HCT116 (cell line): ENCODE measurements at regions of chr2 and their contacts with region 1.

Region 1: GRCh38 chr2:223465793-223466192 is 136.4 kb downstream of the SCG2 start:
- DNase-seq: no peak
- ATAC-seq: no peak
- H3K4me3 ChIP-seq: no peak overlapping the region
- H3K27ac ChIP-seq: no peak overlapping the region
- H3K4me1 ChIP-seq: peaks cover 9 to 23% of the 10 kb centered on the region in 2 experiments
- H3K27me3 ChIP-seq: no peaks in the 10 kb centered on the region
- CTCF ChIP-seq: no peak
- POLR2A ChIP-seq: no peak
- RAD21 ChIP-seq: no peak

Region 2: GRCh38 chr2:223613017-223613950 is 147.5 kb after region 1 on chr2:
- CTCF ChIA-PET with region 1: no interaction called
- POLR2A ChIA-PET with region 1: no interaction called
- RAD21 ChIA-PET with region 1: no interaction called
- intact Hi-C with region 1: loop called (anchors 10 kb)
- DNase-seq: peak; percentile 89
- ATAC-seq: peak; percentile 97
- H3K4me3 ChIP-seq: peak overlapping the region; percentile 24 to 53
- H3K27ac ChIP-seq: peak overlapping the region; percentile 83
- H3K4me1 ChIP-seq: peaks cover 30 to 46% of the 10 kb centered on the region in 2 experiments
- H3K27me3 ChIP-seq: no peaks in the 10 kb centered on the region
- CTCF ChIP-seq: no peak
- POLR2A ChIP-seq: no peak
- RAD21 ChIP-seq: peak; percentile 49